ENCODE measurements at regions of chr15 and their contacts with region 1.

Region 1: DNA sequence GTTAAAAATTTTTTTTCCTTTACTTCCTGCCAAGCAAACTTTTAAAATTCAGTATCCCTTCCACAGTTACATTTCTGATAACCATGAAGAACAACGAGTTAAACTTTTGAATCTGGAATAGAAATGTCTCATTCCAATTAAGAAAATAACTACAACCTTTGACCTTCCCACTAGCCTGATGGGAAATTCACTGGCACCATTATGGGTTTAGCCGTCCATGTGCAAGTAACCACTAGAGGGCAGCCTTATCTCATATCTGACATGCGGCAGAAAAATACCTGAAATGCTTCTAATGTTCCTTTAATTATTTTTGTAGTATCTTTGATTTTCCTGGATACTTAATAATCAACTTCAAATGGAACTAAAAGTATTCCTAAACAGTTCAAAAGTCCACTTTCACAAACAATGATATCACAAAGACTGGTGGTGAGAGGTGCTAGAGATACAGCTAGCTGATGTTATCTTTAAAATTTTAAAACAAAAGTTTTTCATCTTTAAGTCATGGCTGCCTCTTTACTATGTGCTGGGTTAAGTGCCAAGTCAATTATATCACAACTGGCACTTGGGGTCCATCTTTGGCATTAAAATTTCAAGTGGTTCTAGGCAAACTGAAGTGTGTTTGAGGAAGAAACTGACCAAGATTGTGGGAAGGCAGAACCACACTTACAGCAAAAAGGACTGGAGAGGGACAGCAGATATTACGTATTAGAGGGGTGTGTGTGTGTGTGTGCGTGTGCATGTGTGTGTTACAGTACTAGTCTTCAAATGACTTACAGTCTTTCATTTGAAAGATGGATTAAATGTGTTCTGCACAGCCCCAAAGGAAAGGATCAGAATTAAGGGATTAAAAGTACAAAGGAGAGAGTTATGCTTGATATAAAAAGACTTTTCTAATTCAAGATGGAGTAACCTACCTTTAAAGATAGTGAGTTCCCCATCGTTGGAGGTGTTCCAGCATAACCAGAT is 107.1 kb upstream of the ICE2 start:
- DNase-seq: peak; percentile 68
- ATAC-seq: peak; percentile 83

Region 2: GRCh38 chr15:60916679-60917460 is 330.8 kb after region 1 on chr15:
- intact Hi-C with region 1: loop called (anchors 10 kb)
- DNase-seq: peak; percentile 88
- ATAC-seq: peak; percentile 96

Region 3: DNA sequence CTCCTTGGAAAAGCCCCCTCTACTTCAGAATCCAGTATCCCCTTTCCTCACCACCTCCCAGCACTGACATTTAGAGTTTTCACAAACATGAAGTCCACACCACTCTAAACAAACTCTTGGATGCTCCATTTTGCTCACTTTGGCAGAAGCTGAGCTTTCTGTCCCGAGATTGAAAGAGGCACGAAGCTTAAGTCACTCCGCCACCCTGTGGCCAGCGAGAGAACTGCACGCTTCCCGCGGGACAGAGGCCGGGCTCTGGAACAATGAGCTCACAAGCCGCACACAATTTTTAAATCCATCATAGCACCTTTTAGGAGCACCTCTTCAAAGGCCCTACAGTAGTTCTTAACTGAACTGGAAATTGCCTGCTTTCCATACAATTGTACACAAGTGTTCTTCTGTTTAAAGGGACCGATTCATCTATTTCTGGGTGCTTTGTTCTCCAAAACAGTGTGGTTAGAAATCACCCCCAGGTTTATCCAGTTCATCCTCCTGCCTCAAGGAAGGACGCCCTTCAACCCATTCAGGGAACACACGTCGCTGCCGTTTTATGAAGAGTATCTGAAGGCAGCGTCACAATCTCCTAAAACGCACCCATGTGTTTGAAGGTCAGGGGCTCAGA is 1248.2 kb after region 1 on chr15:
- intact Hi-C with region 1: loop called (anchors 10 kb)
- DNase-seq: peak; percentile 91
- ATAC-seq: peak; percentile 90

Measured in sciatic nerve (tissue), 2 donors.